ENCODE measurements at regions of chr10 and their contacts with region 1.

Region 1: DNA sequence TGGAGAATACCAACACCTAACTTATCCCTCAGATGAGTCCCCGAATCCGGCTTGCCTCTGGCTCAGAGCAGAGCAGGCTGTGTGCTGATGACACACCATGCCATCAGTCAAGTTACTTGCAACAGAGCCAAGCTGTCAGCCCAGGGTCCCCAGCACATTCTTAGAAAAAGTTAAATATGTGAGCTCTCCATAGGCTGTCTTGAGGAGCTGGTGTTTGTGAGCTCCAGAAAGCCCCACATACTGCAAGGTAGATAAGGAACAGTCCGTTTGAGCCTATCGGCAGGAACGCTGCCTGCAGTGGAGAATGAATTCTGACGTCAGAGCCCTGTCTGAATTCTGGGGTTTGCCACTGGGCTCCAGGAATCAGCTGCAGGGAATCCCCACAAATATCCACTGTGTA is 3.8 kb downstream of the SFXN4 start:
- DNase-seq: no peak
- ATAC-seq: no peak
- H3K4me3 ChIP-seq: no peak overlapping the region
- H3K27ac ChIP-seq: peak overlapping the region; percentile 27
- H3K4me1 ChIP-seq: peaks cover 27% of the 10 kb centered on the region
- H3K27me3 ChIP-seq: no peaks in the 10 kb centered on the region
- CTCF ChIP-seq: no peak

Region 2: DNA sequence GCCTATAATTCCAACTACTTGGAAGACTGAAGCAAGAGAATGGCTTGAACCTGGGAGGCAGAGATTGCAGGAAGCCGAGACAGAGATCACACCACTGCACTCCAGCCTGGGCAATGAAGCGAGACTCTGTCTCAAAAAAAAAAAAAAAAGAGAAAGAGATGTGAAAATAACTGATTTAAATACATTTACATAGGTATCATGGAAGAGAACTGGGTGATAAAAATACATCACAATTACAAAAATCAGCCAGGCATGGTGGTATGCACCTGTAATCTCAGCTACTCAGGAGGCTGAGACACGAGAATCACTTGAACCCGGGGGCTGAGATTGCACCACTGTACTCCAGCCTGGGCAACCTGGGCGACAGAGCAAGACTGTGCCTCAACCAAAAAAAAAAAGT is 112.3 kb before region 1 on chr10:
- intact Hi-C with region 1: loop called in 1 of 2 experiments (anchors 5 kb)
- DNase-seq: no peak
- ATAC-seq: no peak
- H3K4me3 ChIP-seq: no peak overlapping the region
- H3K27ac ChIP-seq: no peak overlapping the region
- H3K4me1 ChIP-seq: no peaks in the 10 kb centered on the region
- H3K27me3 ChIP-seq: no peaks in the 10 kb centered on the region
- CTCF ChIP-seq: no peak

Region 3: DNA sequence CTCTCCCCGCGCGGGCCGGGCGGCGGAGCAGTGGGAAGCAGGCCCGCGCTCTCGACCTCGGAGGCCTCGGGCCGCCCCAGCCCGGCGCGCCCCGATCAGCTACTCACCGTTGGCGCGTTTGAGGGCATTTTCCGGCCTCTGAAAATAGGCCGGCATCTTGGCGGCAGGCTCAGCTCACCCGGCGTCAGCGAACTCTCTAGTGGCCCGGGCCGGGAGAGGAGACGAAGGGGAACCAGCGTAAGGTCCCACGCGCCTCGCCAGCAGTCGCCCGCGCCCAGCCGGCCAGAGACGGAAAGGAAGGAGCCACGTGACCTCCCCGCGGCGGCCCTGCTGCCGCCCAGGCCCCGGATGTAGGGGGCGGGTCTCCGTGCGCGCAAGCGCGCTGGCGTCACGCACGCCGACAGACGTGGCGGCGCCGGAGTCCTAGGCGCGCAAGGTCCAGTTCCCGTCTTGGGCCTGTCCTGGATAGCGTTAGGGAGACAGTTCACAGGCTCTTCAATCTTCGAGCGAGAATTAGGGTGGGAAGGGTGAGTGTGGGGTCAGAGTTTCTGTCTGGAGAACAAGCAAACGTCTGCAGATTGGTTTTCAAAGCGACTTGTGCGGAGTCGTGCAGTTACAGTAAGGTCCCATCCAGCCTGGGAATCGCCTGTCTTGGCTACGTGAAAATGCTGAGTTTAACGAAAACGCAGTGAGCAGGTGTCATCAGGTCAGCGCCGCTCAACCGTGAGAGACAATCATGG is 81.0 kb before region 1 on chr10 and contains the start of gene EIF3A:
- intact Hi-C with region 1: loop called in 1 of 2 experiments (anchors 5 kb)
- DNase-seq: peak; percentile 92 to 97
- ATAC-seq: peak; percentile 96 to 97 (median 96)
- H3K4me3 ChIP-seq: peak within 1 kb of the TSS; percentile 82
- H3K27ac ChIP-seq: peak within 1 kb of the TSS; percentile 94
- H3K4me1 ChIP-seq: peaks cover 26% of the 10 kb centered on the region
- H3K27me3 ChIP-seq: no peaks in the 10 kb centered on the region
- CTCF ChIP-seq: no peak
- total RNA-seq, gene EIF3A: 148 to 226 (median 190) TPM

Region 4: GRCh38 chr10:119120413-119120867 is 41.2 kb before region 1 on chr10:
- intact Hi-C with region 1: loop called in 1 of 2 experiments (anchors 5 kb)
- DNase-seq: no peak
- ATAC-seq: peak; percentile 89 to 94 (median 92)
- H3K4me3 ChIP-seq: no peak overlapping the region
- H3K27ac ChIP-seq: peak overlapping the region; percentile 83
- H3K4me1 ChIP-seq: peaks cover 14% of the 10 kb centered on the region
- H3K27me3 ChIP-seq: no peaks in the 10 kb centered on the region
- CTCF ChIP-seq: no peak